ENCODE measurements at regions of chr14 and their contacts with region 1.

Region 1: DNA sequence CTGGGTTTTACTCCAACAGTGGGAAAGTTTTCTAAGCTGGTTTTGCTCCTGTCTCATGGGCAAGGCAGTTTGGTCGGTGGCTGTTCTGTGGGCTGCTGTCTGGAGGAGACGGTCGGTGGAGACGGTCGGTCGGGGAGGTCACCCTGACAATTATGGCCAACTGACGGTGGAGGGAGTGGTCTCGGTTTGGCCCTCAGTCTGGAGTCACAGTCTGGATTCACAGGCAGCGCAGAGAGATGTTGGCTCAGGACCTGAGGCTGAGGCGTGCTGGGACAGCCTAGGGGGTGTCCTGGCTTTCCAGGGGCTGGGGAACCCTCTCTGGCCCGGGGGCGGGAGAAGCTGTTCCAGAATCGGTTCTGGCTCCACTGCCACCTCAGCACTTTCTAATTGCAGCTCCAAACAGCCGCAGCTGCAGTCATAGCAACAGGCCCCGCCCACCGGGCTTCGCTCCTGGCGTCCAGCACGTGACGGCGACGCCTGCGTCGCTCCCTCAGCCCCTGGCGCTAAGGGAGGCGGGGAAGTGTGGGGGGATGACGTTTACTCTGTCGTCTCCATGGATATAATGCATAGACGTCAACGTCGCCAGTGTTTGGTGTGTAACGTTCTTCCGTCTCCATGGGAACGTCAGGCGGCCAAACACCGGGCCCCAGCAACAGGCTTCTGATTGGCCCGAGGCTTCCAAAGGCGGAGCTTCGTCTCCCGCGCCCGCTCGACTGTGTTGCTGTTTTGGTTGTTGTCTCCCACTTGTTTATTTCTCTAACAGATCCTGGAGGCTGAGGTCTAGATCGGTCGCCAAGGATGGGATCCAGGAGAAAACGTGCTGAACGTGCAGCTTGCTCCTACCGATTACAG is 19.8 kb upstream of the FOS start:
- DNase-seq: peak; percentile 92
- H3K4me3 ChIP-seq: peak overlapping the region; percentile 42 to 52; a peak in 3 of 4 replicates
- H3K27ac ChIP-seq: peak overlapping the region; percentile 96 to 98
- H3K4me1 ChIP-seq: peaks cover 17 to 20% of the 10 kb centered on the region in 2 experiments; a peak in 3 of 4 replicates
- H3K27me3 ChIP-seq: no peaks in the 10 kb centered on the region
- CTCF ChIP-seq: no peak
- EP300 ChIP-seq: peak in 1 of 2 experiments; percentile 62; a peak in 2 of 4 replicates
- RAD21 ChIP-seq: peak; percentile 1; the same call in 1 of the 2 replicates

Region 2: DNA sequence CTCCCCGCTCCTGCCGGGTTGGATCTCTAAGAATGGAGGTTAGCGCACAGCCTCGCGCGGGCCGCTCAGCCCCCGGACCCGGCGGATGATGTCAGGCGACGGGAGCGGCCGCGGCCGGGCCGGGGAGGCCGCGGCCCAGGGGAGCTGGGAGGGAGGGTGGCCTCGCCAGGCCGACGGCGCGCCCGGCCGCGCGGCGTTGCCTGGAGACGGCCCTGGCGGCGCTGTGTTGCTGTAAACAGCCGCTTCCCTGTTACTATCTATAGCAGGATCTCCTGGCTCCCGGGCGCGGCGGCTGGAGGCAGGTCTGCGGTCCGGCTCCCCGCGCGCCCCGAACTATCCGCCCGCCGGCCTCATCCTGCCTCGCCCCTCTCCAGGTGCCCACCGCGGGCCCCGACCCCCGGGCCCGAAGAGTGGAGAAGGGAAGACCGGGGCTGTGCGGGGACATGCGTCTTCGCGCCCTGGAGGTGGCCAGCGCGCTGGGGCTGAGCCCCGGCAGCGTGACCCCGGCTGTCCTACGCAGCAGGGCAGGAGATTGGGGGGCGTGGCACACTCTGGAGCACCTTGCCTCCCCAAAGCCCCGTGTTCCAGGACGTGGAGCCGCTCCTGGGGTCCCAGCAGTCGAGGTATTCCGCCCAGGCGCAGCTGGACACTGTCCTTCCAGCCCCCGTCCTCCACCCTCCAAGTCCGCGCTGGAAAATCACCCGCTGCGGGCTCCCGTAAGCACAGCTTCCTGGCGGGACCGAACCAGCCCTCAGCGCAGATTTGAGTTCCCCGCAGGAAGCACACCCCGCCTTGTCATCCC is 18.4 kb after region 1 on chr14:
- CTCF ChIA-PET with region 1: interaction called, 3 read pairs
- POLR2A ChIA-PET with region 1: interaction called, 16 read pairs
- DNase-seq: peak; percentile 92
- H3K4me3 ChIP-seq: peak overlapping the region; percentile 75 to 79
- H3K27ac ChIP-seq: peak overlapping the region; percentile 91 to 96
- H3K4me1 ChIP-seq: peaks cover 4 to 17% of the 10 kb centered on the region in 2 experiments; a peak in 3 of 4 replicates
- H3K27me3 ChIP-seq: no peaks in the 10 kb centered on the region
- CTCF ChIP-seq: no peak
- EP300 ChIP-seq: peak; percentile 14 to 26; a peak in 2 of 4 replicates
- RAD21 ChIP-seq: no peak